ENCODE measurements at regions of chr1 and their contacts with region 1.

Region 1: DNA sequence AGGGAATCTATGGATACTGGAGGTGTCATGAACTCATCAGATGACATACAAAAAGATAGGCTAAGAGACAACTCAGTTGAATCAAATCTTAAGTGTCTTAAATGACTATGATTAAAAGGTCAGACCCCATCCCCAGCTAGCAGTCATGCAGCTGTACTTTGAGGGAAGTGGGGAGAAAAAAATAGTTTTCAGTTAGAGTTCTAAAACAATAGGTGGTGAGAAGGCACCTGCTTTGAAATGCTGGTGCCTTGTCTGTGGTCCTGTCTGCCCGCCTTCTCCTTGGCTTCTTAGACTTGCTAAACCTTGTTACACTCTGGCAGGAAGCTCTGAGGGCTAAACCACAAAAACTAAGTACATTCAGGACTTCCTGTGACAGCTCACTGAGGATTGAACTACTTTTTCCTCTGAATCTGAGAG is 15.3 kb downstream of the CD2 start:
- DNase-seq: peak; percentile 90
- ATAC-seq: peak; percentile 79
- H3K4me3 Mint-ChIP-seq: peak overlapping the region; percentile 56
- H3K27ac Mint-ChIP-seq: peak overlapping the region; percentile 99
- H3K4me1 Mint-ChIP-seq: peaks cover 90% of the 10 kb centered on the region
- H3K27me3 Mint-ChIP-seq: no peaks in the 10 kb centered on the region

Region 2: DNA sequence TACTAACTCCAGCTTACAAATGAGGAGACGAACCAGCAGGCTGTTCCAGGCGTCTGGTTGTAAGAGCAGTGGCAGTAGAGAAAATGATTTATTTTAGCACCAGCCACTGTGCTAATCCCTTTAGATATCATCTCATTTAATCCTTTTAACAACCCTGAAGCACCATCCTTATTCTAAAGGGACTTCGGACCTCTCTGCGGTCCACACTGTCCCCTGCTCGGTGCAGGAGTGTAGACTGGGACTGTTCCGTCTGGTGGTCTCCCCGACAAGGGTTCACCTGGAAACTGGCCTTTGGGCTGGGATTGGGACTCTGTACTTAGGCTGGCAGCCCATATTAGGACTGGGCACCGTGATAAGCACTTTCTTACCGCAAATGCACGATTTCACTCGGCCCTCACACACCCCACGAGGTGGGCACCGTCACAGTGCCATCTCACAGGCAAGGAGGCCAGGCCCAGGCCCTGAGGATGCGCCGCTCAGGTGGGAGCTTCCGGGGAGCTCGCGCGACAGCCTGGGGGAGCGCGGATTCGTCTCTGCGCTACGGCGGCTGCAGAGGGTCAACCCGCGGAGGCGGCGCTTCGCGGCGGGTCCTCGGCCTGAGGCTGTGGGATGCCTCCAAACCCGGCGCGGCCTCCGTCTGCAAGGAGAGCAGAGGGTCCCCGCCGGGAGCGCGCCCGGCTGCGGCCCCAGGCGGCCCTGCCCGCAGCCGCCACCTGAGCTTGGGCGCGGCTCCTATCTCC is 351.3 kb before region 1 on chr1:
- CTCF ChIA-PET with region 1: no interaction called
- POLR2A ChIA-PET with region 1: no interaction called
- DNase-seq: peak; percentile 90
- ATAC-seq: peak; percentile 94
- H3K4me3 Mint-ChIP-seq: peak overlapping the region; percentile 90
- H3K27ac Mint-ChIP-seq: peak overlapping the region; percentile 92
- H3K4me1 Mint-ChIP-seq: peaks cover 68% of the 10 kb centered on the region
- H3K27me3 Mint-ChIP-seq: peaks cover 7% of the 10 kb centered on the region

Region 3: GRCh38 chr1:116785006-116785405 is 15.4 kb after region 1 on chr1:
- CTCF ChIA-PET with region 1: interaction called, 19 read pairs
- POLR2A ChIA-PET with region 1: interaction called, 5 read pairs
- DNase-seq: no peak
- ATAC-seq: no peak
- H3K4me3 Mint-ChIP-seq: no peak overlapping the region
- H3K27ac Mint-ChIP-seq: no peak overlapping the region
- H3K4me1 Mint-ChIP-seq: peaks cover 22% of the 10 kb centered on the region
- H3K27me3 Mint-ChIP-seq: no peaks in the 10 kb centered on the region

Region 4: GRCh38 chr1:116794804-116795481 is 25.4 kb after region 1 on chr1:
- CTCF ChIA-PET with region 1: interaction called, 202 read pairs
- POLR2A ChIA-PET with region 1: interaction called, 377 read pairs
- DNase-seq: no peak
- ATAC-seq: no peak
- H3K4me3 Mint-ChIP-seq: no peak overlapping the region
- H3K27ac Mint-ChIP-seq: no peak overlapping the region
- H3K4me1 Mint-ChIP-seq: peaks cover 73% of the 10 kb centered on the region
- H3K27me3 Mint-ChIP-seq: no peaks in the 10 kb centered on the region

Region 5: GRCh38 chr1:116826818-116827606 is 57.4 kb after region 1 on chr1:
- CTCF ChIA-PET with region 1: interaction called, 9 read pairs
- POLR2A ChIA-PET with region 1: interaction called, 29 read pairs
- DNase-seq: peak; percentile 78
- ATAC-seq: peak; percentile 88
- H3K4me3 Mint-ChIP-seq: peak overlapping the region; percentile 52
- H3K27ac Mint-ChIP-seq: peak overlapping the region; percentile 94
- H3K4me1 Mint-ChIP-seq: peaks cover 49% of the 10 kb centered on the region
- H3K27me3 Mint-ChIP-seq: no peaks in the 10 kb centered on the region

Region 6: GRCh38 chr1:116881879-116882520 is 112.4 kb after region 1 on chr1:
- CTCF ChIA-PET with region 1: interaction called, 92 read pairs
- POLR2A ChIA-PET with region 1: interaction called, 13 read pairs
- DNase-seq: peak; percentile 65
- ATAC-seq: peak; percentile 35
- H3K4me3 Mint-ChIP-seq: no peak overlapping the region
- H3K27ac Mint-ChIP-seq: no peak overlapping the region
- H3K4me1 Mint-ChIP-seq: peaks cover 9% of the 10 kb centered on the region
- H3K27me3 Mint-ChIP-seq: no peaks in the 10 kb centered on the region

Region 7: GRCh38 chr1:116895073-116895472 is 125.5 kb after region 1 on chr1:
- CTCF ChIA-PET with region 1: no interaction called
- POLR2A ChIA-PET with region 1: no interaction called
- DNase-seq: no peak
- ATAC-seq: no peak
- H3K4me3 Mint-ChIP-seq: no peak overlapping the region
- H3K27ac Mint-ChIP-seq: no peak overlapping the region
- H3K4me1 Mint-ChIP-seq: no peaks in the 10 kb centered on the region
- H3K27me3 Mint-ChIP-seq: peaks cover 10% of the 10 kb centered on the region